ENCODE measurements at regions of chr11 and their contacts with region 1.

Region 1: GRCh38 chr11:3854977-3855807 is at the start of gene STIM1:
- DNase-seq: peak; percentile 99
- H3K4me3 ChIP-seq: peak within 1 kb of the TSS; percentile 85 to 94 (median 92)
- H3K27ac ChIP-seq: peak within 1 kb of the TSS; percentile 85 to 100 (median 98)
- H3K4me1 ChIP-seq: peaks cover 33 to 69% (median 62%) of the 10 kb centered on the region in 6 donors
- H3K27me3 ChIP-seq: no peaks in the 10 kb centered on the region
- CTCF ChIP-seq: peak; percentile 98 to 100 (median 99)
- POLR2A ChIP-seq: peak in 1 of 3 donors; percentile 32
- total RNA-seq, gene STIM1: 55.4 to 85.2 (median 65.0) TPM

Region 2: DNA sequence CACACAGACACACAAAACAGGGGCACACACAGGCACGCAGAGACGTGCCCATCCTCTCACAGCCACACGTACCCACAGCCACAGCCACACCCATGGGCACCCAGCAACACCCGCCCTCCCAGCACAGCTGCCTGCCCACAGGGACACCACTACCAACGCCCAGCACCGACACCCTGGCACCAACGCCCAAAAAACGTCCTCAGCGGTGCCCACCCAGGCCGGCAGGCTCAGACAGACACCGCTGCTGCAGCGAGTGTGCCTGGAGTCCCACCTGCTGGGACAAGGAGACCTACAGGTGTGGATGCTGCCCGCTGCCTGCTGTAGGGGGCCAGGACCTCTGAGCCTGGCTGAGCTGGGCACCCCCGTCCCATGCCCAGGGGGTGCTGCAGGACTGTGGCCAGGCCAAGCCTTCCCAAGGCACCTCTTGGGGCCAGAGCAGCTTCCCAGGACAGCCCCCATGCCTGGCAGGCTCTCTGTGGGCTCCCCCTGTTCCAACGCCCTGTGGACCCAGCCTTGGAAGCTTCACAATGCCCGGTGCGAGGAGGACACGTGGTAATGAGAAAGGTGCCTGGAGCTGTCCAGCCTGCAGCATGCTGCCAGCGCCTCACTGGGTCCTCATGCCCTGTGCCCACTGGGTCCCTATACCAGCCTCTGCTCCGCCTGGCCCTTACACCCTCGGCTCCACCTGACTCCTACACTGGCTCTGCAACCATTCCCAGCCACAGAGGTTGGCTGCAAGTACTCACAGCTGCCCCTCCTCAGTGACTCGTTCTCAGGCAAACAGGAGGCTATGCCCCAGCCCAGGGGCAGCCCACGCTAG is 1637.8 kb before region 1 on chr11:
- intact Hi-C with region 1: no loop called
- DNase-seq: peak; percentile 73
- H3K4me3 ChIP-seq: no peak overlapping the region
- H3K27ac ChIP-seq: no peak overlapping the region
- H3K4me1 ChIP-seq: peaks cover 0 to 17% (median 2%) of the 10 kb centered on the region in 6 donors
- H3K27me3 ChIP-seq: peaks cover 0 to 32% (median 0%) of the 10 kb centered on the region in 7 donors
- CTCF ChIP-seq: no peak
- POLR2A ChIP-seq: no peak

Region 3: DNA sequence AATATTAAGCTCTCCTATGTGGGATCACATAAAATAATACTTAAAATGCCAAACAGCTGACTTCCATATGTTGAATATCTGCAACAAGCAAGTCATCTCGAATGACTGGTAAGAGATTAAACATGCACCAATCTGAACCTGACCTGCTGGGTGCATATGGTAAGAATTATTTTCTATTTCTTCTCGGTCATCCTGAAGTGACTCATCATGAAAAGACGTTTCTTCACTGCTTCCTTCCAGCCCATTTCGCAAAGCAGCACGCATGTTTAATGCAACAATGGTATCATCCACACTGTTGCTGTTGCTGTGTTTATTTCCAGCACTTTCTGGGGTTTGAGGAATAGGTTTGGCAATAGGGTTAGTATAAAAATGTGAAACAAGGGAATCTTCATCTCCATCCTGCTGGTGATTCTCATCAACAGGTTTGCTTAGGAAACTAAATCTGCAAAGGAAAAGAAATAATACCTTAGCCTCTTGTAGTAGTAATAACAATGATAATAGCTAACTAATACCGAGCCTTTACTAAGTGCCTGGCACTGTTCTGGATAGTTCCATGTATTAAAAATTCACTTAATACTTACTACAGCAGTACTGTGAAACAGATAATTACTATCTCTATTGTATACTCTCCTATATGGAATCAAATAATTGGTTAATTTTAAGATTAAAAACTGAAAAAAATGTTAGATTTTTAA is 132.0 kb before region 1 on chr11:
- intact Hi-C with region 1: no loop called
- DNase-seq: no peak
- H3K4me3 ChIP-seq: peak overlapping the region in 1 of 8 donors; percentile 5
- H3K27ac ChIP-seq: peak overlapping the region in 5 of 8 donors; percentile 21 to 72 (median 64)
- H3K4me1 ChIP-seq: peaks cover 0 to 13% (median 0%) of the 10 kb centered on the region in 6 donors
- H3K27me3 ChIP-seq: no peaks in the 10 kb centered on the region
- CTCF ChIP-seq: no peak
- POLR2A ChIP-seq: no peak

Region 4: DNA sequence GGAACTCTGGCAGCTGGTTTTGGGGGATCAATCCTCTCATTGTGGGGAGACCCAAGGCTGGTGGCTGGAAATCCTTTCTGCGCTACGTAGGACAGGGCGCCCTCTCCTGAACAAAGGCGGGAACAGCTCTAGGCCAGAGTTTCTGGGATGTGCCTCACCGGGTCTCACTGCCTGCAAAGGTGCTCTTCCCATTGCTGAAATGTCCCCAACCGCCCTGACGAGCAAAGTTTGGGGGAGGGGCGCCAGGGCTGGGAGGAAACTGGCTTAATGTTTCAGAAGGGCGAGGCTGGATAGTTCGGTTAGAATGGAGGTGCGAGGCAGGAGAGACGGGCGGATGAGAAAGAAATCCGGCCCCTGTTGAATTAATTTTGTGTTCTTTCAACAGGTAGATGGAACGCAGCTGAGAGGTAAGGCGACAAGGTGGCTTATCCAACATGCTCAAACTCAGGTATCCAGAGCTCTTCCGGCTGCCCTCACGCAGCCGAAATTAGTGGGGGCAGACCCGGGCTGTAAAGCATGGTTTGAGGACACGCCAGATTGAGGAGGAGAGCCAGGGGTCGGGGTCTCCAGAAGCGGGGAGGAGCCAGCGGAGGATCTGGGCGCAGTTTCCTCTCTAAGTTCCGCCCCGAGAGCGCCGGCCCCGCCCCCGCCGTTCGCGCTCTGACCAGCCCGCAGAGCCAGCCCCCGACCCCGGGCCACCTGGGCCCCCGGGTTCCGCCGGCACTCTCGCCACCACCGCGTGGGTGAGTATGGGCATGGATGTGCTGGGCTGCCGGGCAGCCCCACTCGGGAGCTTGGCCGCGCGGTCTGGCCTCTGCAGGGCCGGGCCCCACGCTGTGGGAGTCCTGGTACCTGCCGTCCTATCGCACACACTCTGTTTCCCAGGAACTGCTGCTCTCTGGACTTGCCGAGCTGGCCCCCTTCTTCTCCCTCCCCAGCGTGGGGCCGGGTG is 47.0 kb before region 1 on chr11 and contains the start of gene PGAP2:
- intact Hi-C with region 1: no loop called
- DNase-seq: peak; percentile 93
- H3K4me3 ChIP-seq: peak within 1 kb of the TSS; percentile 57 to 87 (median 64)
- H3K27ac ChIP-seq: peak within 1 kb of the TSS; percentile 63 to 91 (median 81)
- H3K4me1 ChIP-seq: peaks cover 4 to 23% (median 12%) of the 10 kb centered on the region in 6 donors
- H3K27me3 ChIP-seq: no peaks in the 10 kb centered on the region
- CTCF ChIP-seq: peak; percentile 36 to 75 (median 60)
- POLR2A ChIP-seq: no peak
- total RNA-seq, gene PGAP2: 10.7 to 22.2 (median 13.3) TPM

Region 5: DNA sequence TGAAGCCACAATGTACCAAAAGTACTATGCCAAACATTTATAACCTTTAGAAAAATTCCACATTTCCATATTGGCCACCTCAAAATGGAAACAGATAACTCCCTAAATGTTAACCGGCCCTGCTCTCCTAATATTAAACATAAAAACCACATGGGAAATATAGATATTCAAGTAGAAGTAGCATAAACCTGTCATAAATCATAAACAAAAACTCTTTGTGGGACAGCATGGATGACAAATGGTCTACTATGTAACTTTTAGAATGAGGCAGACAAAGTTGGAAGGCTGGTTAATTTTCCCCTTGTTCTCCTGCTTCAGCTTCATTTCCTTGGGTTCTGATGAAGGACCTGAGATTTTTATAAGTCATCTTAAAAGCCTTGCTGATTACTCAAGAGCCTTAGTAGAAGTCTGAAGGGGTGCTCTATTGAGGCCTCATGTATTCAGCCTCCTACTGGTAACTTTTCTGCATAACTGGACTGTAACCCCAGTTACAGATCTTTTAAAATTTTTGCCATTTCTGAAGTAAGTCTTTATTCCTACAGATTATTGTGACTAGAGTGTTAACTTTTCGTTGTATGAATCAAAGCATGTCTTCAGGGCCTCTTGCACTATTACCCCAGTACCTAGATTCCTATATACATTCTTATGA is 116.7 kb after region 1 on chr11:
- intact Hi-C with region 1: no loop called
- DNase-seq: no peak
- H3K4me3 ChIP-seq: no peak overlapping the region
- H3K27ac ChIP-seq: no peak overlapping the region
- H3K4me1 ChIP-seq: peaks cover 0 to 70% (median 3%) of the 10 kb centered on the region in 6 donors
- H3K27me3 ChIP-seq: no peaks in the 10 kb centered on the region
- CTCF ChIP-seq: no peak
- POLR2A ChIP-seq: no peak

Region 6: DNA sequence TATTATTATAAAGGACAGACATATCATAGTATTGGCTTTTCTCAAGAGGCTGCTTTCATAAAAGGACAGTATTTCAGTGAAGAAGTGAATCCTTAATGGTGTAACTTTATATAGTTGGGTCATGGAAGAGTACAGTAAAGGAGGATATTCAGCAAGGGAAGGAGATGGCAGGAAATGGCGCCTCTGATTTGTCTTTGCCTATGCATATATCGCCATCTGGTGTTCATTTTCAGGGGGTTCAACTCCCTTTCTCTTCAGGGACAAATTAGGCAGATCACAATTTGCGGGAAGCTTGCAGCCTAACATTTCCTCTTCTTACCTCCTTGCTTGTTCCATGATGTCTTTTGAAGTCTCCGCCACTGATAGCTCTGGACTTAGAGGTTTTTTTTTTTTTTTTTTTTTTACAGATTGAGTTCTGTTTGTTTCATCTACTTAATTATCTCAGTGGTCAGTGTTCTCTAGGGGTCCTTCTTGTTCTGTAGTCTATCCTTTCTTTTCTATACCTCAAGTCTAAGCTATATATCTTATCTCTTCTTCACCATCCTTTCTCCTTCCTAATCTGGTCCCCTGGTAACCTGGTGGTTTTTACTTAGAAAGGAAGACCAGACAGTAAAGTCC is 217.6 kb after region 1 on chr11:
- intact Hi-C with region 1: loop called (anchors 2 kb)
- DNase-seq: no peak
- H3K4me3 ChIP-seq: no peak overlapping the region
- H3K27ac ChIP-seq: peak overlapping the region in 4 of 8 donors; percentile 27 to 56 (median 39)
- H3K4me1 ChIP-seq: peaks cover 0 to 55% (median 35%) of the 10 kb centered on the region in 6 donors
- H3K27me3 ChIP-seq: no peaks in the 10 kb centered on the region
- CTCF ChIP-seq: peak; percentile 80 to 97 (median 93)
- POLR2A ChIP-seq: no peak

Measured in spleen (tissue), 13 donors.